ENCODE measurements at regions of chr3 and their contacts with region 1.

Region 1: DNA sequence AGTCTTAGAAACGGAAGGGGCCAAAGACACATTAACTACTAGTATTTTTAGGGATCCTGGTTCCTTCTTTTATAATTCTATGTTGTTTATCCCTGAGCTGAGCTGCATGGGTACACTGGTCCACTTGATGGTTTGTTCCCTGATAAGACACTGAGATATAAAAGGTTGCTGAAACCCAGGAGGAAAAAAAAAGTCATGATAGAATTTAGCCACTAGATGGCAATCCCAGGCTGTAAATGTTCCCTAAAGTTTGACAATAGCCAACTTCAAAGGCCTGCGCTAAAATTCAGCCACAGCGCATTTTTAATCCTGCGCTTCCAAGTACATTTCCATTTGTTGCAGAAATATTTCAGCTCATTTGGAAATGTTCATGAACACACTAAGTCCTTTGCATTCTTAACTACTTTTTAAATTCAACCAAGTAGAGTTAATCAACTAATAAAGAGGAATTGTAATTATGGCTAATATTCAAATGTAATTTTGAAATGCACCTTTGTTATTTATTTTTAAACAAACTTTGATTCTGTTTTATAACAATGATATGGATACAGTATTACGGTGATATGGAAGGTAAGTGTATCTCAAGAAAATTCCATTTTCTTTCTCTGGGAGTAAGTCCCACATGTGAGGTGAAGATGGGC is 249.3 kb upstream of the FEZF2 start:
- DNase-seq: no peak
- ATAC-seq: peak; percentile 26

Region 2: DNA sequence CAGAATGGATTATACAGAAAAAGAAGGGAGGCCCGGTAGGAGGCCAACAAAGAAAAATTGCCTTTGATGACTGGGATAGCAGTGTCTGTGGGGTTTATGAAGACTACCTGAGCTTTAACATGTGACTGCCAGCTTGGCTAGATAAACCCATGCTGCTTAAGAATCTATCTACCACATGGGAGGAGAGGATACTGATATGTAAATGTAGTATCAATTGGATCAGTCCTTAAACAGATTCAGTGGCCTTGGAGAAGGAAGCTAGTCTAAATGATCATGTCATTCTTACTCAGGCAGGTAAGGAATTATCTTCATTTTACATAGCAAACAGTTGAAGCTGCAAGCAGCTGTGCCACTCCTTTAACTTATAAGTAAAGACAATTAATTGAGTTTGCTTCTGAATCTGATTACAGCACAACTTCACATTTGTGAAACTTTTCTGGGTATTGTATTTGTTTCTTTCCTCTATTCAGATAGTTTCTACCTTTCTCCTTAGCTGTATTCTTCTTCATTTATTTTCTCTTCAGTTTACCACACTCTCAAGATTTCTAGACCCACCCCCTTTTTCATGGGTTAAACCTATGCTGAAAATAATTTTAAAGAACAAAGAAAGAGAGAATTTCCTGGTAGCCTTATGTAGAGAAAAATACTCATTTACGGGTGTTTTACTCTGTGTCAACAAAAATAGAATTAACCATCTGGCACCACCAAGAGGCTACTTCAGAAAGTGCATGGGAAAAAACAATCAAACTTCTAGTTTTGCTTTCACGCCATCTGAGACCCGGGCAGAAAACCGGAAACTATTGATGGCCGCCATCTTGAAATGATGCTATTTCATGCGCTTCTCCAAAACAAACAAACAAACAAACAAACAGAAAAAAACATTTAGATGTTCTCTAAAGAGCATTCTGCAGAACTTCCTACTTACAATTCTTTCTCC is 605.7 kb after region 1 on chr3:
- intact Hi-C with region 1: loop called (anchors 2 kb)
- DNase-seq: no peak
- ATAC-seq: no peak

Region 3: DNA sequence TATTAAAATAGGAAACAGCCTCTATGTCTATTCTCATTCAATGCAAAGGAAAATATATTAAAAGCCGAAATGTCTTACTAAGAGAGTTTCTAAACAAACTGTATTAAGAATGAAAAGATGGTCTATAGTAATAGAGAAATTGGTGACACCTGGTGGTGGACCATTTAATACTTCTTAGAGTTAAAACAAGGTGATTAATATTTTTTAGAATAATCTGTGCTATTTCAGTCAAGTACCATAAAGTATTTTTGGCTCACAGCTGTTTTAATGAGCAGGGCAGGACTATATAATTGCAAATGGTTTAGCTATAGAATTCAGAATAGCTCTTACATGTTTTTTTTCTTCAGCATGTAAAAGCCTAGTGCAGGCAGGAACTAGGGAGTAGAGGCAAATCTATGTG is 711.2 kb after region 1 on chr3:
- intact Hi-C with region 1: loop called (anchors 5 kb)
- DNase-seq: no peak
- ATAC-seq: no peak

Measured in Right ventricle myocardium inferior (tissue), 1 donor.